Mucosa of descending colon (tissue), 3 donors: ENCODE measurements at regions of chr7 and their contacts with region 1.

Region 1: DNA sequence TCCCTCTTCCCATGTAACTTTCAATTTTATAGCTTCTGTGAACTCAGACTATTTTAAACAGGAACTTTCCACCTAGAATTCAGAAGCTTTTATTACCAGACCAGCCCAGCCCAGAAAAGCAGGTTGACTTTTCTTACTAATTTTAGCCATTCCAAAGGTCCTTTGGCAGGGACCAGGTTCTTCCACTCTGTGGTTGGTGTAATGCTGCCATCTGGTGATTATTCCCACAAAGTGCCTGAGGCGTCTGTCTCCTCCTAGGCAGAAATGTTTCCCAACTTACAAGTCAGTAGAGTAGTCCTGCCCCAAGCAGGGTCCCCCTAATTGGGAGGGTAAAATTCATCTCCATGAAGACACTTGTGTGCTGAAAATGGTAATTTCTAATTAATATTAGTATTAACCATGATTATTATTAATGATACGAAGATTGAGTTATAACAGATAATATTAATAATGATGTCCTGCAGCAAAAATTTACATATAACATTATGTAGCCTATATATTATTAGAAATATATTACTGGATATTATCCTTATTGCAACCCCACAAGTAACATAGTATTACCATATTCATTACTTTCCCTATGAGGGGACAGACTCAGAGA is 53.0 kb upstream of the PPP1R17 start:
- DNase-seq: peak in 2 of 3 donors; percentile 48 to 75
- ATAC-seq: peak; percentile 99
- H3K4me3 ChIP-seq: no peak overlapping the region
- H3K4me1 ChIP-seq: no peaks in the 10 kb centered on the region
- CTCF ChIP-seq: peak; percentile 66

Region 2: DNA sequence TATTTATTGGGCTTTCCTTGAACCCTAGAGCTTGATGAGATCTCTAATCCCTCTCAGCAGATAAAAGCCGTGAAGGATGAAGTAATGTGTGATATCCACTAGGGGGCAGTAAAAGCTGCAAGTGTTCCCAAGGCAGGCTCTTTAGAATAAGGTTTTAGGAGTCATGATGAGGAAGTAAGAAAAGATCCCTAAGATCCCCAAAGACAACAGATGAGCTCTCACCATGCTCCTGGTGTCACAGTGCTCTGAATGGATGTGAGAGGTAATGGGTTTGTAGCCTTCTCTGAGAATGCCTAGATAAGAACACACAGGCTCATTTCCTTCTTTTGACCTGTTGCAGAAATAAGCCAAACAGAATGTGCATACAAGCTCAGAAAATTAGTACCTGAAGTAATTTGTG is 190.5 kb before region 1 on chr7:
- intact Hi-C with region 1: loop called in 1 of 2 experiments (anchors 5 kb)
- DNase-seq: peak in 1 of 3 donors; percentile 12
- ATAC-seq: peak; percentile 94
- H3K4me3 ChIP-seq: no peak overlapping the region
- H3K4me1 ChIP-seq: no peaks in the 10 kb centered on the region
- CTCF ChIP-seq: peak; percentile 67

Region 3: GRCh38 chr7:31695859-31696614 is 62.0 kb after region 1 on chr7:
- intact Hi-C with region 1: no loop called
- DNase-seq: no peak
- ATAC-seq: no peak
- H3K4me3 ChIP-seq: no peak overlapping the region
- H3K4me1 ChIP-seq: no peaks in the 10 kb centered on the region
- CTCF ChIP-seq: no peak

Region 4: GRCh38 chr7:32506266-32507054 is 872.5 kb after region 1 on chr7:
- intact Hi-C with region 1: no loop called
- DNase-seq: no peak
- ATAC-seq: peak; percentile 40
- H3K4me3 ChIP-seq: no peak overlapping the region
- H3K4me1 ChIP-seq: peaks cover 6% of the 10 kb centered on the region
- CTCF ChIP-seq: no peak